Common myeloid progenitor, CD34-positive (primary cell): ENCODE measurements at regions of chr6 and their contacts with region 1.

Region 1: GRCh38 chr6:110873981-110874879 is at the start of gene AMD1:
- DNase-seq: peak; percentile 95 to 98 (median 97)
- H3K4me3 ChIP-seq: peak within 1 kb of the TSS; percentile 91 to 99 (median 96)
- H3K27ac ChIP-seq: peak within 1 kb of the TSS; percentile 87 to 95
- H3K4me1 ChIP-seq: peaks cover 22 to 39% (median 30%) of the 10 kb centered on the region in 4 experiments
- H3K27me3 ChIP-seq: no peaks in the 10 kb centered on the region

Region 2: GRCh38 chr6:110491644-110492317 is 382.4 kb before region 1 on chr6:
- CTCF ChIA-PET with region 1: no interaction called
- POLR2A ChIA-PET with region 1: no interaction called
- DNase-seq: no peak
- H3K4me3 ChIP-seq: no peak overlapping the region
- H3K27ac ChIP-seq: no peak overlapping the region
- H3K4me1 ChIP-seq: peaks cover 0 to 5% (median 0%) of the 10 kb centered on the region in 4 experiments
- H3K27me3 ChIP-seq: no peaks in the 10 kb centered on the region

Region 3: GRCh38 chr6:110682460-110682853 is 191.8 kb before region 1 on chr6:
- CTCF ChIA-PET with region 1: interaction called, 36 read pairs
- POLR2A ChIA-PET with region 1: interaction called, 7 read pairs
- DNase-seq: peak; percentile 95 to 98 (median 98)
- H3K4me3 ChIP-seq: no peak overlapping the region
- H3K27ac ChIP-seq: peak overlapping the region in 1 of 2 experiments; percentile 47
- H3K4me1 ChIP-seq: peaks cover 6 to 26% (median 14%) of the 10 kb centered on the region in 4 experiments
- H3K27me3 ChIP-seq: no peaks in the 10 kb centered on the region

Region 4: GRCh38 chr6:110688661-110689268 is 185.5 kb before region 1 on chr6:
- CTCF ChIA-PET with region 1: interaction called, 36 read pairs
- POLR2A ChIA-PET with region 1: interaction called, 5 read pairs
- DNase-seq: peak in 2 of 3 donors; percentile 45 to 57
- H3K4me3 ChIP-seq: peak overlapping the region in 2 of 7 experiments; percentile 5 to 51
- H3K27ac ChIP-seq: no peak overlapping the region
- H3K4me1 ChIP-seq: peaks cover 11 to 36% (median 25%) of the 10 kb centered on the region in 4 experiments
- H3K27me3 ChIP-seq: no peaks in the 10 kb centered on the region

Region 5: DNA sequence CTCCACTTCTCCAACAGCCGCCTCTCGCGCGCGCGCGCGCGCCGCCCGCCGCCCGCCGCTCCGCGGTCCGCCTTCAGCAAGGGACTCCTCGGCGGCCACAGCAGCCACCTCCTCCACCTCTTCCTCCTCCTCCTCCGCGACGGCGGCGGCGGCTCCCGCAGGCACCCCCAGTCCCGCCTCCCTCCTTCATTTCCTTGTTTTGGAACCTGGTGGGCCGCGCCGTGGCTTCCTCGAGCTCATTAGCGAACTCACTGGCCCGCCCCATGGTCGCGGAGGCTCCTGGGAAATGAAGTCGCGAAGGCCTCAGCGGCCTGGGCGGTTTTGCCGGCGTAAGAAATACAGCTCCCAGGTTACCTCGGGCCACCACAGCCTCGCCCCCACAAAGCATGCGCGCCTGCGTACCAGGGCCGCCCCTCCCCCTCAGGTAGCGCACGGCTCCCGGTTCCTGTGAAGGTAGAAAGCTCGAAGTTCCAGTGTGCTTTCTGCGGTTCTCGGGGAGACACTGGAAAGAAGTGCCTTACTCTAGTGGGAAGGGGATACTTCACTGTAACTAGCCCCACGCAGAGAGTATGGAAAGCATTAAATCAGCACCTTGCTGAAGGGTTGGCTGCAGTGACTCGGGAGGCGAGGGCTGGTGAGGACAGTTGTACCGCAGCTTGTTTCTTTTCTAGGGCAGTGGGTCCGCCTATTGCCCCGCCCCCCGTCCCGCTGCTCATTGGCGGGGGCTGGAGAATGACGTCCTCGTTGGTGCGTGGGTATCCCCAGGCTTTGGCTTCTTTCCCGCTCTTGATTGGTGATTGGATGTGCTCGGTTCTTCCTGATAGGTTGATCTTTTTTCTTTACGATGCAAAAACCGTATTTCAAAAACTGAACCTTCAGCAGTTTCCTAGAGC is 58.8 kb before region 1 on chr6 and contains the start of gene CDK19:
- CTCF ChIA-PET with region 1: interaction called, 22 read pairs
- POLR2A ChIA-PET with region 1: interaction called, 69 read pairs
- DNase-seq: peak; percentile 100
- H3K4me3 ChIP-seq: peak within 1 kb of the TSS; percentile 75 to 99 (median 95)
- H3K27ac ChIP-seq: peak within 1 kb of the TSS; percentile 83 to 94
- H3K4me1 ChIP-seq: peaks cover 9 to 46% (median 29%) of the 10 kb centered on the region in 4 experiments
- H3K27me3 ChIP-seq: no peaks in the 10 kb centered on the region

Region 6: DNA sequence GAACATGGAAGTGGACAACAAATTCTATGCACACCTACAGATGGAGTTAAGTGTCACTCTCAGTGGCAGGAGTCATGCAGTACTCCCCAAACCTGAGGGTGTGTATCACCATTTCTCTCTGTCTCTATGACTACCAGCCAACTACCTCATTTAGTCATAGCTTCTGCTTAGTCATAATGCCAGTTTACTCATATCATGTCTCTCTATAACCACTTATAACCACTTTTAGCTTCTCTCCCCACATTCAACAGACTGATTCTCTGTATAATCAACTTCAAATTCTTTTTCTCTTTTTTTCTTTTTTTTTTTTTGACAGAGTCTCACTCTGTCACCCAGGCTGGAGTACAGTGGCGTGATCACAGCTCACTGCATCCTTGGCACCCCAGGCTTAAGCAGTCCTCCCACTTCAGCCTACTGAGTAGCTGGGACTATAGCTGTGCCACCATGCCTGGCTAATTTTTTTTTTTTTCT is 70.5 kb after region 1 on chr6:
- CTCF ChIA-PET with region 1: interaction called, 76 read pairs
- POLR2A ChIA-PET with region 1: interaction called, 6 read pairs
- DNase-seq: peak; percentile 92 to 99 (median 98)
- H3K4me3 ChIP-seq: peak overlapping the region in 2 of 7 experiments; percentile 23 to 24
- H3K27ac ChIP-seq: peak overlapping the region; percentile 82 to 93
- H3K4me1 ChIP-seq: peaks cover 7 to 53% (median 28%) of the 10 kb centered on the region in 4 experiments
- H3K27me3 ChIP-seq: no peaks in the 10 kb centered on the region

Region 7: GRCh38 chr6:111486921-111487320 is 612.7 kb after region 1 on chr6:
- CTCF ChIA-PET with region 1: no interaction called
- POLR2A ChIA-PET with region 1: interaction called, 13 read pairs
- DNase-seq: no peak
- H3K4me3 ChIP-seq: no peak overlapping the region
- H3K27ac ChIP-seq: no peak overlapping the region
- H3K4me1 ChIP-seq: peaks cover 11 to 22% (median 19%) of the 10 kb centered on the region in 4 experiments
- H3K27me3 ChIP-seq: no peaks in the 10 kb centered on the region